ENCODE measurements at regions of chr19 and their contacts with region 1.

Region 1: GRCh38 chr19:14006243-14006765 is at the start of gene RFX1:
- DNase-seq: peak; percentile 100
- ATAC-seq: peak; percentile 84
- H3K4me3 Mint-ChIP-seq: peak within 1 kb of the TSS; percentile 94
- H3K27ac Mint-ChIP-seq: peak within 1 kb of the TSS; percentile 98
- H3K4me1 Mint-ChIP-seq: peaks cover 39% of the 10 kb centered on the region
- H3K27me3 Mint-ChIP-seq: no peaks in the 10 kb centered on the region
- total RNA-seq, gene RFX1: 14.2 to 15.3 TPM

Region 2: GRCh38 chr19:13731147-13731964 is 274.9 kb before region 1 on chr19:
- CTCF ChIA-PET with region 1: no interaction called
- POLR2A ChIA-PET with region 1: no interaction called
- intact Hi-C with region 1: loop called in 1 of 2 experiments (anchors 1 kb)
- DNase-seq: peak; percentile 97
- ATAC-seq: peak; percentile 99
- H3K4me3 Mint-ChIP-seq: peak overlapping the region; percentile 87
- H3K27ac Mint-ChIP-seq: peak overlapping the region; percentile 94
- H3K4me1 Mint-ChIP-seq: peaks cover 25% of the 10 kb centered on the region
- H3K27me3 Mint-ChIP-seq: no peaks in the 10 kb centered on the region

Region 3: DNA sequence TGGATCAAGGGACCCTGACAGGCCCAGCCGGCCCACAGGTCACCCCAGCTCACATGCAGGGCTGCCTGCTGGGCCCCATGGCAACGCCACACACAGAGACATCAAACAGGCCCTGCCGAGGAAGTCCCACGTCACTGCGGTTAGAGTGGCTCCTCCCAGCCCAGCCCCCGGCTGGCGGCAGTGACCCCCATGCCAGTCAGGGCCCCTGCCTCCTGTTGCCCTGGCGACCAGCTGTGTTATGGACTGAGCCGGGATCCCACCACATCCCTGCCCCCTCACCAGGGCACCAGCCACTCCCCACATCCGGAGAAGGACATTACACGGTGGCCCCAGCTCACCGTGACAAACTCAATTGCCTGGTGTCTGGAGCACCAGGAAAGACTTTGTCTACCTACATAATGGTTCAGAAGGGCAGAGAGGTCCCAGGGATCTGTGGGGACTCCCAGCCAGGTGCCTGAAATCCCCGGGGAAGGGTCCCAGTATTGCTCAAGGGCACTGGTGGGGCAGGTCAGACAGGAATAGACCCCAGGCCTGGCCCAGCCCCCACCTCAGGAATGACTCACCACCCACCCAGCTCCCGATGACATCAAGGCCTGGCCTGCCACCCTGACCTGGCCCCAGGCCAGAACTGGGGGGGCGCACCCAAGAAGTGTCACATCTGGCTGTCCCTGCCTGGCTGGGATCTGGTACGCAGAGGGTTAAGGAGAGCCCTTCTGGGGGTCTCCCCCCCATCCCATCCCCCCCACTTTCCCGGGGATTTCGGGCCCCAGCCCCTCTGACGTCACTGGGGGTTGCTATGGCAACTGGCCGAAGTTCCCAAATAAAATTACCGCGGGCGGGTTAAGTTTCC is 159.5 kb before region 1 on chr19:
- CTCF ChIA-PET with region 1: no interaction called
- POLR2A ChIA-PET with region 1: interaction called, 4 read pairs
- intact Hi-C with region 1: loop called in 1 of 2 experiments (anchors 1 kb)
- DNase-seq: peak; percentile 97
- ATAC-seq: peak; percentile 69
- H3K4me3 Mint-ChIP-seq: peak overlapping the region; percentile 71
- H3K27ac Mint-ChIP-seq: peak overlapping the region; percentile 97
- H3K4me1 Mint-ChIP-seq: peaks cover 56% of the 10 kb centered on the region
- H3K27me3 Mint-ChIP-seq: no peaks in the 10 kb centered on the region

Region 4: DNA sequence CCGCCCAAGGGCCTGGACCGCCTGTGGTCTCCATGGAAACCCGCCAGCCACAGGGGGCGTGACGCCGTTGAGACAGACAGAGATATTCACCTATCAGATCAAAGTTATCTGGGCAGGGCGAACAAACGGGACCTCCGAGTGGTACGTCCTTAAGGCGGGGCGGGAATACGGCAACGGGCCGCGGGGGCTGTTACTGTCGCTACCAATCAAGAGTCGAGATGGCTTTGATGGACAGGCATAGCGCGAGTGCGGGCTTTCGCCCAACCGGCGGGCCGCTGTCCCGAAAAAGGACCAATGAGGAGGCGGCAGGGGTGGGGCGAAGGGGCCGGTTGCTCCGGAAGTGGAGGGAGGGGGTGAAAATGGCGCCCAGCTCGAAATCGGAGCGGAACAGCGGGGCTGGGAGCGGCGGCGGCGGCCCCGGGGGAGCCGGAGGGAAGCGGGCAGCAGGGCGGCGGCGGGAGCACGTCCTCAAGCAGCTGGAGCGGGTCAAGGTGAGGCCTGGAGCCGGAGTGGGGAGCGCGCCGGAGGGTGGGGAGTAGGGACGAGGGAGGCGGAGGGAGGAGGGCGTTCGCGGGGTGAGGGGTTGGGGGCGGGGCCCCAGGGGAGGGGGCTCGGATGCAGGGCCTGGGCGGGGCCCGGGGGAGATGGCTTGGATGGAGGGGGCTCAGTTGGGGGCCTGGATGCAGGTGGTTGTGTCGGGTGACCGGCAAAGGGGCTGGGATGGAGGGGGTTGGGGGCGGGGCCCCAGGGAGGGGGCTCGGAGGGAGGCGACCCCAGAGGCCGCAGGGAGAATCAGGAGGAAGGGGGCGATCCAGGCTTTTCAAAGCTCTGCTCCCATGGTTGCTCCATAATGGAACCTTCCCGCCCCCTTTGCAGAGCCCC is 53.9 kb before region 1 on chr19 and contains the start of gene DCAF15:
- CTCF ChIA-PET with region 1: no interaction called
- POLR2A ChIA-PET with region 1: interaction called, 3 read pairs
- intact Hi-C with region 1: loop called (anchors 1 kb)
- DNase-seq: peak; percentile 100
- ATAC-seq: peak; percentile 99
- H3K4me3 Mint-ChIP-seq: peak within 1 kb of the TSS; percentile 88
- H3K27ac Mint-ChIP-seq: peak within 1 kb of the TSS; percentile 81
- H3K4me1 Mint-ChIP-seq: peaks cover 16% of the 10 kb centered on the region
- H3K27me3 Mint-ChIP-seq: no peaks in the 10 kb centered on the region
- total RNA-seq, gene DCAF15: 55.8 to 61.6 TPM

Region 5: GRCh38 chr19:14073261-14073924 is 67.1 kb after region 1 on chr19:
- CTCF ChIA-PET with region 1: no interaction called
- POLR2A ChIA-PET with region 1: no interaction called
- intact Hi-C with region 1: loop called in 1 of 2 experiments (anchors 1 kb)
- DNase-seq: peak; percentile 87
- ATAC-seq: peak; percentile 74
- H3K4me3 Mint-ChIP-seq: peak overlapping the region; percentile 87
- H3K27ac Mint-ChIP-seq: peak overlapping the region; percentile 80
- H3K4me1 Mint-ChIP-seq: peaks cover 21% of the 10 kb centered on the region
- H3K27me3 Mint-ChIP-seq: peaks cover 2% of the 10 kb centered on the region

Region 6: GRCh38 chr19:14366498-14366915 is 360.2 kb after region 1 on chr19:
- CTCF ChIA-PET with region 1: no interaction called
- POLR2A ChIA-PET with region 1: no interaction called
- intact Hi-C with region 1: loop called in 1 of 2 experiments (anchors 1 kb)
- DNase-seq: peak; percentile 95
- ATAC-seq: peak; percentile 50
- H3K4me3 Mint-ChIP-seq: peak overlapping the region; percentile 45
- H3K27ac Mint-ChIP-seq: peak overlapping the region; percentile 100
- H3K4me1 Mint-ChIP-seq: peaks cover 78% of the 10 kb centered on the region
- H3K27me3 Mint-ChIP-seq: no peaks in the 10 kb centered on the region

Region 7: DNA sequence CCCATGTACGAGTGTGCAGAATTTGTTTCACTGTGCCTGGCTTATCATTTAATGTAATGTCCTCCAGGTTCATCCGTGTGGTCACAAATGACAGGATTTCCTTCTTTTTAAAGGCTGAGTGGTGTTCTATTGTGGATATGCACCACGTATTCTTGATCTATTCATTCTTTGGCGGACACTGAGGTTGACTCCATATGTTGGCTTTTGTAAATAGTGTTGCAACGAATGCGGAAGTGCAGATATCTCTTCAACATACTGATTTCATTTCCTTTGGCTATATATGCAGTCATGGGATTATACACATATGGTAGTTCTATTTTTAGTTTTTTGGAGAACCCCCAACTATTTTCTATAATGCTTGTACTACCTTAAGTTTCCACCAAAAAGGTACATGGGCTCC is 815.6 kb after region 1 on chr19:
- CTCF ChIA-PET with region 1: no interaction called
- POLR2A ChIA-PET with region 1: no interaction called
- intact Hi-C with region 1: no loop called
- DNase-seq: no peak
- ATAC-seq: no peak
- H3K4me3 Mint-ChIP-seq: no peak overlapping the region
- H3K27ac Mint-ChIP-seq: no peak overlapping the region
- H3K4me1 Mint-ChIP-seq: no peaks in the 10 kb centered on the region
- H3K27me3 Mint-ChIP-seq: peaks cover 35% of the 10 kb centered on the region

Region 8: DNA sequence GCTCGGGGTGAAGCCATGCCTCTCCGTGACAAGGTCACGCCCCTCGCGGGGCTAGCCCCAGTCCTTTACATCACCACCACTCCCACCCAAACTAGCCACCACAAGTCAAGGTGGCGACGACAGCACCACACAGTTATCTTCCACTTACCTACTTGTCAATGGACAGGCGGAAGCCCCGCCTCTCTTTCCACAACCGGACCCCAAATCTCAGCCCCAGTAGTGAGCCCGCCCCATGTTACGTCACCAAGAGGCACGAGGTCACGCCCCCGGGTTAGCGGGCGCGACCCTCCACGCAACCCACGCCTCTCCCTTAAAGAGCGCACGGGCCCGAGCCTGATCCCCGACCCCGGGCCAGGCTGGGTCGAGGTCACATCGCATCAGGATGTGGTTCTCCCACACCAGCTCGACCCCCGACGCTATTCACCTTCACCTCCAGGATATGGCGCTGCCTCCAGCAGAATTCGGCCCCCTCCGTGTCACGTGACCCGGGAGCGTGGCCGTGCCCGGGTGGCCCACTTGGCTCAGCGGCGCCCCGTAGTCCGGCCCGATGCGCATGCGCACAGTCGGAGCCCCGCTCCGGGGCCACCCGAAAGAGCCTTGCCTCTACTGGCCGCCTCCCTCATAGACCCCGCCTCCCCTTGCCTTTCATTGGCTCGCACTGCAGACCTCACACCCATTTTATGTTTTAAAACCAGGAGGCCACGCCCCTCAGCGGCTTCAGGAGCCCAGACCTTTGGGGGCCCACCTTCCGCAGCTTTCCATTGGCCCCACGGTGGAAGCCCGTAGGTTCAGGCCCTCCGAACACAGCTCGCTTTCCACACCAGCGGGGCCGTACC is 1119.1 kb after region 1 on chr19:
- CTCF ChIA-PET with region 1: no interaction called
- POLR2A ChIA-PET with region 1: no interaction called
- intact Hi-C with region 1: loop called in 1 of 2 experiments (anchors 5 kb)
- DNase-seq: peak; percentile 99
- ATAC-seq: peak; percentile 91
- H3K4me3 Mint-ChIP-seq: peak overlapping the region; percentile 87
- H3K27ac Mint-ChIP-seq: peak overlapping the region; percentile 96
- H3K4me1 Mint-ChIP-seq: peaks cover 32% of the 10 kb centered on the region
- H3K27me3 Mint-ChIP-seq: no peaks in the 10 kb centered on the region

Measured in activated CD4-positive, alpha-beta T cell treated with anti-CD3 and anti-CD28 coated beads for 36 hours (primary cell).